Posterior vena cava (tissue), 2 donors: ENCODE measurements at regions of chr3 and their contacts with region 1.

Region 1: DNA sequence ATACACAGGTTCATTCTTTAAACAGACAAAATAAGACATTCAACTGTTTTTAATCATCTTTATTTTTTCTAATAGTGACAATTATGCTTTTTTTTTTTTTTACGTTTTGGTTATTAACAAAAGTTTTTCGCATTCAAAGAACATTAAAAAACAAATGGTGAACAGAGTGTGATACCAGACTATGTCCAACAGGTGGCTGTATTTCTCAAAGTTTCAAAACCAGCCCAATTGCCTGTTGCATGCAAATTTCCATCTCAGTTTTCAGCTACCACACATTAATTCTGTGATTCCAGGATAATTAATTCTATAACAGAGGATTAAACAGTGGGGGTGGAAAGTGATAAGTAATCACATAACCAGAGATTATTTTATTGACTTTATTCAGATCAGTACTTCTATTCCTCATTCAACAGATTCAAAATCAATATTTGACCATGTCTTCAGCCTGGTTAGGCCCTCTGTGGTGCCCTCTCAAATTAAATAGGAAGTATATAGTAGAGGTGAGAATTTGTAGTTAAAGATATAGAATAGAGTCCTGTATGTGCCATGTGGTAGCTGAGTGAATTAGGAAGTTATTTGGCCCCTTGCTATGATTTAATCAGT is 122.2 kb upstream of the DCBLD2 start:
- DNase-seq: no peak

Region 2: GRCh38 chr3:98798820-98799219 is 224.9 kb before region 1 on chr3:
- intact Hi-C with region 1: no loop called
- DNase-seq: no peak

Region 3: DNA sequence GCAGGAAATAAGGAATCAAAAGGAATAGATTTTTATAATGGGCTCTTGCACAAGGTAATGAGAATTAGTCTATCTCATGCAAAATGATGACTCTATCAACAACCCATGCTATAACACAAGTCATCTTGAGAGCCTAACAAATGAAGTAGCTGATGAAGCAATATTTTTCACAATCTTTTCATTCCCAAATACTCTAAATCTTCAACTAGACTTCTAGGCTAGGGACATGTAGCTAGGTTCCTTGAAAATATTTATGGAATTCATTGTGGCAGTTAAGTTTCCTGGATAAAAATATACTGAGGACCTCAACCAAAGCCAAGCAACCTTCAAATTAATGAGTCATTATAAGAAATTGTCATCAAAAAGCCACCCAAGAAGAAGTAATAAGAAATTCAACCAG is 177.6 kb before region 1 on chr3:
- intact Hi-C with region 1: no loop called
- DNase-seq: no peak

Region 4: DNA sequence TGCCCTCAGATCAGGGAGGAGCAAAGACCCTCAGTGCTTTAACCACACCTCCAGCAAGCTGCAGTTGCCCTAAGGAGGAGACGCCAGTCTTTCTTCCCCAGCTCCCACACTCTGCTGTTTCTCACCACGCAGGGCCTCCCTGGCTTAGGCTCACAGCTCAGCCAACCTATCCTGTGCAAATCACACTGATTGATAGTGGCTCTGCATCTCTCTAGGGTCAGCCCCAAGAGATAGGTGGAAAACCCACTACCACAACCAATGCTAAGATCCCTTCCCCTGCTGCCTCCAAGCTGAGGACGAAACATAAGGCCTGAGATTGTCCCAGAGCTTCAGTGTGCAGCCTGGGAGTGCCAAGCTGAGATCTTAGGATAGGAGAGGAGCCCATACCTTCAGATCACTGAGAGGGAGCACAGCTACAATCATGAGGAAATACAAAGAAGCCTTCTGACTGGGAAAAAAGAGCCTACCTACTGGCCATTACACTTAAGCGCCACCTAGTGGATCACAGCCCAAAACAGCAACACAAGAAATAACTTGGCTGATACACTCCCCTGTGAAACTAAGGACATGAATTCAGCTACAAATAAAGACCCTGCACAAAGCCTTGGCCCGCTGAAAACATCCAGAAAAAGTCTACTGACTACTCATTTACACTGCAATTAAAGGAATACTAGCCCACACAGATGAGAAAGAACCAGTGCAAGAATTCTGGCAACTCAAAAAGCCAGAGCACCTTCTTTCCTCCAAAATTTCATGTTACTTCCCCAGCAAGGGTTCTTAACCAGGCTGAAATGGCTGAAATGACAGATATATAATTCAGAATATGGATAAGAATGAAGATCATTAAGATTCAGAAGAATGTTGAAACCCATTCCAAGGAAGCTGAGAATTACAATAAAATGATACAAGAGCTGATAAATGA is 149.3 kb after region 1 on chr3:
- intact Hi-C with region 1: loop called in 1 of 2 experiments (anchors 5 kb)
- DNase-seq: peak; percentile 59

Region 5: DNA sequence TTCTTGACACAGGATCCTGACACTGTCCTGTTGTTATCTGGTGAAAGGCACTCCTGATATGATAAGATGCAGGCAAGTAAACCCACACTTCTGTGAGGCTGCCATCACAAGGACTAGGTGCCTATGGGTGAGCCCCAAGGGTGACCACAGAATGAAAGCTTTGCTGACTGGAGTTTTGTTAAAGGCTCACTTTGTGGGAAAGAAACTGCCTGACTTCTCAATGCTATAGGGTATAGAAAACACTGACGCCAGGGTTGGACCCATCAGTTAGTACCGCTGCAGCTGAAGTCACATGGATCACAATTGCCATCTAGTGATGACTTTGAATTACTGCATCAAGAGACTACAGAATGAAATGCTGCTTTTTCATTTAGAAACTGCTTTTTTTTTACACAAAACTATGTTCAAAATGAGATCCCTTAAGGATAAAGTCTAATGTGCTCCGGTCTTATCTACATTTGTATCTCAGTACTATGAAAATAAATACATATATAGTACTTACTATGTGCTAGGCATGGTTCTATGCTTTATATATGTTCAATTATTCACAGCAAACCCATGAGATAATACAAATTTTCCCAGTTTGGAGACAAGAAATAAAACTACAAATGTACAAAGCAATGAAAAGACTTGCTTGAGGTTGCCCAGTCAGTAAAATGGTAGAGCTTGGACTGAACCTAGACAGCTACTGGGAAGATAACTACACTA is 729.7 kb after region 1 on chr3:
- intact Hi-C with region 1: loop called in 1 of 2 experiments (anchors 10 kb)
- DNase-seq: no peak

Region 6: GRCh38 chr3:99789011-99789721 is 765.5 kb after region 1 on chr3:
- intact Hi-C with region 1: loop called in 1 of 2 experiments (anchors 1 kb)
- DNase-seq: no peak